AG04449 (cell line): ENCODE measurements at regions of chr13 and their contacts with region 1.

Region 1: GRCh38 chr13:110799246-110800236 is 86.0 kb downstream of the ING1 start:
- DNase-seq: peak; percentile 45
- H3K4me3 ChIP-seq: peak overlapping the region; percentile 48
- CTCF ChIP-seq: no peak

Region 2: DNA sequence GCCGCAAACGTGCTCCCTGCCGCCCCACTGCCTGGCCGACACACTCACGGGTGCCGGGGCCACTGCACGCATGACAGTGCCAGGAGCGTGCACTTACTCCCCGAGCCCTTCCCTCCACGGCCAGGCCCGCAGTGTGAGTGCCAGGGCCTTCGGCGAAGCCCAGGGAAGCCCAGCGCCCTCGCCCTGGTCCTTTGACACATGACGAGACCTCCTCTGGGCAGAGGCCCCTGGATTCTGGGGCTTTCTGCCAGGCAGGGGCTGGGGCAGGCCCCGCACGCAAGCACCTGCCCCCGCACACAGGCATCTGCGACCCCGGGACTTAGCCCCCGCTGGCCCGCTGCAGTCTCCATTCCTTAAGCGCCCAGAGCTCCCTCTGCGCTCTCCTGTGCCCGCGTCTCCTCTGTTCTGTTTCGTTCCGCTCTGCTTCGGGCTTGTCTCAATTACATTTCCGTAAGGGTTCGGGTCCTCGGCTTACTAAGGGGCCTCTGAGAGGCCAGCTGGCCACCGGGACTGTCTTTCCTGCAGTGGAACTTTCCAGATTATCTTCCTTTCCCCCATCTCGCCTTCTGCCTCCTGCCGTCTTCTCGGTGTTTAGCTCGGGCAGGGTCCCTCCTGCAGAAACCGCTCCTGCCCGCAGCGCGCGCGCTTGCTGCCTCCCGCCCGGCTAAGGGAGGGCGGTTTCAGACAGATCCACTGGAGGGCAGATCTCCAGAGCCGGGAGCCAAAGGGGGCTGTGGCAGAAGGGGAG is 12.8 kb after region 1 on chr13:
- CTCF ChIA-PET with region 1: interaction called, 39 read pairs
- POLR2A ChIA-PET with region 1: no interaction called
- DNase-seq: no peak
- H3K4me3 ChIP-seq: peak overlapping the region; percentile 26
- CTCF ChIP-seq: peak; percentile 23

Region 3: DNA sequence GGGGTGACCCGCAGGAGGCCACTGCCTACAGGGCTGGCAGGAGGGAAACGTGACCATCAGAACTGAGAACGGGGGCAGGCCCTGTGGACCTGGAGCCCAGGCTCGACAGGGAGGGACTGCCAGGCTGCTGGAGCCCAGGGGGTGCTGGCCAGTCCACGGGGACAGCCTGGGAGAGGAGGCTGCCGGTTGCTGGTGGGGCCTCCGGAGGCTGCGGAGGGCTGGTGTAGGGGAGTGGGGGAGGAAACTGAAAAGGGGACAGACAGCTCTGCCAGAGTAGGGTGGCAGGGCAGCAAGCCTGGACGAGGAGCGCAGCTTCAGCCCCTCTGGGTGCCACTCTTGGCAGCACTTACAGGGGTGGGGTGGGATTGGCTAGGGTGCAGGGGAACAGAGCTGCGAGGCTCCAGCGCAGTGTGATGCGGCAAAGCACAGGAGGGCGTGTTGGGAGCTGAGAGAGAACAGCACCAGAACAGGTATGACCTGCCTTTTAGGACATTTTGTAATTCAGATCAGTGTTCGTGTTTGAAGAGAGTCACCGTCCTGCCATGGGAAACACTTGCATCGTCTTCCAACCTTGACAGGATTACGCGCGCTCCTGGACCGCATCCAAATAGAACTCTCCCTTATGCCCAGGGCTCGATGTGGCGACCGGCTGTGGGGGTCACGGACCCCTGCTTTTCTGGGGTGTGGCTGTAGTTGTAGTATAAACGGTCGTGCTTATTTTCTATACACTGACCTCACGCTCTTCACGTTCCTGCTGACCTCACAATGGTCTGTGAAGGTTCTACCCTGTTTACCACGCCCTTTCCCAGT is 295.7 kb after region 1 on chr13:
- CTCF ChIA-PET with region 1: no interaction called
- POLR2A ChIA-PET with region 1: no interaction called
- DNase-seq: no peak
- H3K4me3 ChIP-seq: no peak overlapping the region
- CTCF ChIP-seq: no peak